ENCODE measurements at regions of chr3 and their contacts with region 1.

Region 1: GRCh38 chr3:134308350-134308891 is 57.8 kb upstream of the RYK start:
- DNase-seq: peak; percentile 76
- ATAC-seq: peak; percentile 77
- H3K4me3 ChIP-seq: peak overlapping the region; percentile 5; the same call in 1 of the 2 replicates
- H3K27ac ChIP-seq: peak overlapping the region; percentile 82
- H3K4me1 ChIP-seq: peaks cover 26% of the 10 kb centered on the region
- H3K27me3 ChIP-seq: no peaks in the 10 kb centered on the region
- CTCF ChIP-seq: peak; percentile 99
- POLR2A ChIP-seq: peak; percentile 65
- RAD21 ChIP-seq: peak; percentile 99

Region 2: GRCh38 chr3:134357261-134358184 is 49.1 kb after region 1 on chr3:
- CTCF ChIA-PET with region 1: interaction called, 3 read pairs
- POLR2A ChIA-PET with region 1: no interaction called
- dilution Hi-C with region 1: no loop called
- in situ Hi-C with region 1: no loop called
- intact Hi-C with region 1: loop called (anchors 1 kb)
- DNase-seq: peak; percentile 96
- ATAC-seq: peak; percentile 73
- H3K4me3 ChIP-seq: no peak overlapping the region
- H3K27ac ChIP-seq: peak overlapping the region; percentile 95
- H3K4me1 ChIP-seq: peaks cover 60% of the 10 kb centered on the region
- H3K27me3 ChIP-seq: no peaks in the 10 kb centered on the region
- CTCF ChIP-seq: no peak
- POLR2A ChIP-seq: peak; percentile 56
- RAD21 ChIP-seq: peak; percentile 36

Region 3: GRCh38 chr3:134473868-134474546 is 165.6 kb after region 1 on chr3:
- CTCF ChIA-PET with region 1: interaction called, 38 read pairs
- POLR2A ChIA-PET with region 1: interaction called, 3 read pairs
- dilution Hi-C with region 1: no loop called
- in situ Hi-C with region 1: no loop called
- intact Hi-C with region 1: loop called (anchors 1 kb)
- DNase-seq: peak; percentile 87
- ATAC-seq: peak; percentile 64
- H3K4me3 ChIP-seq: no peak overlapping the region
- H3K27ac ChIP-seq: peak overlapping the region; percentile 79
- H3K4me1 ChIP-seq: peaks cover 24% of the 10 kb centered on the region
- H3K27me3 ChIP-seq: no peaks in the 10 kb centered on the region
- CTCF ChIP-seq: peak; percentile 87
- POLR2A ChIP-seq: peak; percentile 52
- RAD21 ChIP-seq: peak; percentile 91

Region 4: DNA sequence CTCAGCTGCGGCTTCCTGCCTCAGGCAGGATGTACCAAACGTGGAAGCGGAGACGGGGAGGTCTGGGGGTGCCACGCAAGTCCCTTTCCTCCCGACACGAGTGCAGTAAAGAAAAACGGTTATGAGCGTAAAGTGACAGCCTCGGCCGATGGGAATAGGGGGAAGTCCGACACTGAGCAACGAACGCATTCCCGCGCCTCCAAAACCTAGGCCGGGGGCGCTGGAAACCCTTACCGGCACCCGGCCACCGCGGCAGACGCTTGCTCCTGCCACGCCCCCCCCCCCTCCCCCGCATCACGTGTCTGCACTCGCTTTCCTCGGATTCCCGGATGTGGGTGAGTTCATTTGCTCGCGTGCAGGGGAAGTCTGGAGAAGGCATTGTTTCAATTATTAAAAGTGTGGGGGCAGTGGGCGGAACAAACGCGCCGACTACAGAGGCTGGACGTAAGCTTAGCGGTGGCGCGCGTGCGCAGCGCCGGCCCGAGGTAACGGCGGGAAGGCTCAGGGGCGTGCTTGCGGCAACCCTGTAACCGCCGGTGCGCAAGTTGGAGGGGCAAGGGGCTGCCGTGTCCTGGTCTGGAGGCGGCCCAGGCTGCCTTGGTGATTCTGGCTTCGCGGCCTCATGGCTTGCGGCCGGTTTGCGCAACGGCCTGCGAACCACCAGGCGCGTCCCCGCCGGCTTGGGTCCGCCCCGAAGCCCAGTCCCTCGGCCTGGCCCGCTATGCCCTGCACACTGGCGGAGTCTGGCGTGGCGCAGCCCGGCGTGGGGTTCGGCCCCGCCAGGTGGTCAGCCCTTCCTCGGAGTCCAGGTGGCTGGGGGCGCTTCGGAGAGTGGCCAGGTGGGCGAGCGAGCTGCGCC is 177.5 kb after region 1 on chr3 and contains the starts of genes ANAPC13 and CEP63:
- CTCF ChIA-PET with region 1: interaction called, 4 read pairs
- POLR2A ChIA-PET with region 1: interaction called, 6 read pairs
- dilution Hi-C with region 1: no loop called
- in situ Hi-C with region 1: loop called (anchors 5 kb)
- intact Hi-C with region 1: no loop called
- DNase-seq: peak; percentile 99
- ATAC-seq: peak; percentile 86
- H3K4me3 ChIP-seq: peak within 1 kb of the TSS; percentile 54
- H3K27ac ChIP-seq: peak within 1 kb of the TSS; percentile 93
- H3K4me1 ChIP-seq: peaks cover 20% of the 10 kb centered on the region
- H3K27me3 ChIP-seq: no peaks in the 10 kb centered on the region
- CTCF ChIP-seq: no peak
- POLR2A ChIP-seq: peak; percentile 82
- RAD21 ChIP-seq: 0 out of 2 replicates have a peak, but pooled peaks have one; percentile 5
- total RNA-seq, gene ANAPC13: 43.4 and 82.8 TPM in 2 replicates
- total RNA-seq, gene CEP63: 6.5 and 16.1 TPM in 2 replicates

Region 5: DNA sequence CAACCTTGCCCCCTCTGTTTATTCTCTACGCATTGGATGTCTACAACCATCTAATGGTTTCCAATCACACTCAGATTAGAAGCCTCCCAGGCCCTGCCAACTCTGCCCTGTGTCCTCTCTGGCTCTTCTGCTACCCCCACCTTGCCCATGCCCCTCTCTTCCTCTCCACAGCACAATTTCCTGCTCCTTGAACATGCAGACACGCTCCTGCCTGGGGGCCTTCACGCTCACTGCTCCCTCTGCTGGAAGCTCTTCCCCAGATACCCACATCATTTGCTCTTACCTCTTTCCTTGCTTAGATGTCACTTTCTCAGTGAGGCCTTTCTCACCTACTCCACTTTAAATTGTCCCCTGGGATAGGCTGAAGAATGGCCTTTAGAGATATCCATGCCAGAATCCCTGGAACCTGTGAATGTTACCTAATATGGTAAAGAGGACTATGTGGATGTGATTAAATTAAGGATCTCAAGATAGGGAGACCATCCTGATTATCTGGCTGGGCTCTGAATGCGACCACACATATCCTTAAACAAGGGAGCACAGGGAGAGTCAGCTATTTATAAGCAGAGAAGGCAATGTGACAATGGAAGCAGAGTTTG is 332.6 kb after region 1 on chr3:
- CTCF ChIA-PET with region 1: no interaction called
- POLR2A ChIA-PET with region 1: no interaction called
- dilution Hi-C with region 1: no loop called
- in situ Hi-C with region 1: no loop called
- intact Hi-C with region 1: loop called (anchors 2 kb)
- DNase-seq: peak; percentile 49
- ATAC-seq: peak; percentile 84
- H3K4me3 ChIP-seq: no peak overlapping the region
- H3K27ac ChIP-seq: no peak overlapping the region
- H3K4me1 ChIP-seq: no peaks in the 10 kb centered on the region
- H3K27me3 ChIP-seq: peaks cover 16% of the 10 kb centered on the region; the same call in 1 of the 2 replicates
- CTCF ChIP-seq: peak; percentile 57
- POLR2A ChIP-seq: no peak
- RAD21 ChIP-seq: peak; percentile 44

Measured in IMR-90 (cell line).